ENCODE measurements at regions of chr2 and their contacts with region 1.

Region 1: DNA sequence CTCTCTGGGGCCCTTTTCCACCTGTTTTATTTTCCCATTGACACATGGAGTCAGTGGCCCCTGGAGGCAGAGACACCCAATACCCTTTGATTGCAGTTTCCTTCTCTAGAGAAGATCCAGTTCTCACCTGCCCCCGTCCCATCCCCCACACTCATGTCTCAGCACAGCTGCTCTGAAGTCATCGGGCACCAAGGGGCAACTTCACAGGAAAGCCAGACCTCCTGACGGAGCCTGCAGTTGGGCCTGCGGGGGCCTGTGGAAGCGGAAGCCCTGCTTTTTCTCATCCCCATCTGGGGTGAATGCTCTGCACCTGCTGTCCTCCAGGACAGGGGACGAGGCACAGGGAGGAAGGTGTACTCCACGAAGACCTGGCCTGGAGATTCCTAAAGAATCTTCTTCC is 308.3 kb upstream of the EPAS1 start:
- DNase-seq: no peak

Region 2: GRCh38 chr2:45166229-45166890 is 822.5 kb before region 1 on chr2:
- intact Hi-C with region 1: no loop called
- DNase-seq: no peak

Region 3: DNA sequence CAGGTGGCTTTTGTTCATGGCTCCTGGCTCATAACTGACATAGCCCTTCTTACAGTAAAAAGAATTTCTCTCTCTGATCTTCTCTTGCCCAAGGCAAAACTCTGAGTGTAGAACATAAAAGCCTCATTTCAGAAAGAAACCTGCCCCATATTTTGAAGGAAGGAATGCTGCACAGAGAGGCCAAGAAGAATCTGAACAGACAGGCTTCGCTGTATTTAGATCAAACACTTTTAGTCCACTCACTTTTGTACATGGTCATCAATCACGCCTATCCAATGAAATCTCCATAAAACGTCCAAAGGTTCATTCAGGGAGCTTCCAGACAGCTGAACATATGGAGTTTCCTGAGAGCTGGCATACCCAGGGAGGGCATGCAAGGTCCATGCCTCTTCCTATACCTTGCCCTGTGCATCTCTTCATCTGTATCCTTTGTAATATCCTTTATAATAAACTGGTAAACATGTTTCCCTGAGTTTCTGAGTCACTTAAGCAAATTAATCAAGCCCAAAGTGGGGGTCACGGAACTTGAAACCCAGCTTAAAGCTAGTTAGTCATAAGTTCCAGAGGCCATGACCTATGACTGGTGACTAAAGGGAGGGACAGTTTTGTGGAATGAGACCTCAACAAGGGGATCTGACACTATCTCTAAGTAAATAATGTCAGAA is 428.0 kb after region 1 on chr2:
- intact Hi-C with region 1: no loop called
- DNase-seq: no peak

Region 4: DNA sequence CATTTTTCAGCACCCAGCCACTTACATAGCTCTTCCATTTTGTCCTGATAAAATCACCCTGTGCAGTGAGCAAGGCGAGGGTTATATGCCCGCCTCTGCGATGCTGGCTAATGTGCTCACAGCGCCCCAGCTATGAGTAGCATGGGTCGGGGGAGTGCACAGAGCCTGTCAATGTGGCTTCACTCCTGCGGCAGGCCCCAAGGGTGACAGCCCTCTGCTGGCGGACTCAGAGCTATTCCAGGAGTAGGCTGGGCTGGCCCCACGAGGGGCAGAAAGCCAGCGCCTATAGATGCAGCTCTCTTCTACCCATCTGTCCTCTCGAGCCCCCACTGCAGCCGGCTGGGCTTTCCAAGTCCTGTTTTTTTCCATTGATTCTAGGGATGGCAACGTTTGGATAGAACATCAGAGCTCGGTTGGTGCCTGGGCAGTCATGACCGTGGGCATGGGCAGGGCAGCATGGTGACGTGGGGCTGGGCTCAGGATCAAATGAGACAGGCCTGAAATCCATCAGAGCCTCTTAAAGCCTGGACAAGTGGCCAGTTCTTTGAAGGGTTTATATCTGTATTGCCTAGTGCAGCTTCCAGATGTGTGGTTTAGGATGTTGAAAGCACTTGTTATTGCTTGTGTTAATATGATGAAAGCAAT is 792.0 kb after region 1 on chr2:
- intact Hi-C with region 1: loop called in 1 of 2 experiments (anchors 2 kb)
- DNase-seq: no peak

Measured in posterior vena cava (tissue), 2 donors.